Activated CD8-positive, alpha-beta T cell treated with anti-CD3 and anti-CD28 coated beads, Interleukin-2, amount 10 ng/mL, durations not matched to agents 7 days and 5 days (primary cell): ENCODE measurements at regions of chr22 and their contacts with region 1.

Region 1: DNA sequence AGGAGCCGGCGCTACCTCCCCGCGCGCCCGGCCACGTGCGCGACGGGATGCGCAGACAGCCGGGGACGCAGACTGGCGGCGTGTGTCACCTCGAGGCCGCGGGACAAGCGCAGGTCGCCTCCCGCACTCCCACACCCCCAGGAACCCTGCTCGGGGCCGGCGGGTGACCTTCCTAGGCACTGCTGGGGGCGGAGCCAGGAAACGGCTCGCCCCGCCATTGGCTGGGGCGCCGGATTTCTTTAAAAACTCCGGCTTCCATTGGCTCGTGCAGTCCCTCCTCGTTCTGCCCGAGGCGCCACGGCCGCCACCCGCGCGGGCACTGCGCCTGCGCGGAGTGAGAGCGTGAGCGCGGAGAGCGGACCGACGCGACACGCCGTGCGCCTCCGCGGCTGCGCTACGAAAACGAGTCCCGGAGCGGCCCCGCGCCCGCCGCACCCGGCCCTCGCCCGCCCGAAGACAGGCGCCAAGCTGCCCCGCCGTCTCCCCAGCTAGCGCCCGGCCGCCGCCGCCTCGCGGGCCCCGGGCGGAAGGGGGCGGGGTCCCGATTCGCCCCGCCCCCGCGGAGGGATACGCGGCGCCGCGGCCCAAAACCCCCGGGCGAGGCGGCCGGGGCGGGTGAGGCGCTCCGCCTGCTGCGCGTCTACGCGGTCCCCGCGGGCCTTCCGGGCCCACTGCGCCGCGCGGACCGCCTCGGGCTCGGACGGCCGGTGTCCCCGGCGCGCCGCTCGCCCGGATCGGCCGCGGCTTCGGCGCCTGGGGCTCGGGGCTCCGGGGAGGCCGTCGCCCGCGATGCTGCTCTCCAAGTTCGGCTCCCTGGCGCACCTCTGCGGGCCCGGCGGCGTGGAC is at the start of gene PIM3:
- DNase-seq: peak; percentile 95
- ATAC-seq: peak; percentile 86
- H3K4me3 Mint-ChIP-seq: peak within 1 kb of the TSS; percentile 88
- H3K27ac Mint-ChIP-seq: peak within 1 kb of the TSS; percentile 86
- H3K4me1 Mint-ChIP-seq: peaks cover 31% of the 10 kb centered on the region
- H3K27me3 Mint-ChIP-seq: no peaks in the 10 kb centered on the region
- total RNA-seq, gene PIM3: 45.1 to 45.7 TPM

Region 2: GRCh38 chr22:49936018-49936952 is 24.1 kb before region 1 on chr22:
- CTCF ChIA-PET with region 1: interaction called, 3 read pairs
- POLR2A ChIA-PET with region 1: interaction called, 10 read pairs
- DNase-seq: peak; percentile 93
- ATAC-seq: peak; percentile 87
- H3K4me3 Mint-ChIP-seq: peak overlapping the region; percentile 68
- H3K27ac Mint-ChIP-seq: peak overlapping the region; percentile 81
- H3K4me1 Mint-ChIP-seq: peaks cover 22% of the 10 kb centered on the region
- H3K27me3 Mint-ChIP-seq: no peaks in the 10 kb centered on the region

Region 3: DNA sequence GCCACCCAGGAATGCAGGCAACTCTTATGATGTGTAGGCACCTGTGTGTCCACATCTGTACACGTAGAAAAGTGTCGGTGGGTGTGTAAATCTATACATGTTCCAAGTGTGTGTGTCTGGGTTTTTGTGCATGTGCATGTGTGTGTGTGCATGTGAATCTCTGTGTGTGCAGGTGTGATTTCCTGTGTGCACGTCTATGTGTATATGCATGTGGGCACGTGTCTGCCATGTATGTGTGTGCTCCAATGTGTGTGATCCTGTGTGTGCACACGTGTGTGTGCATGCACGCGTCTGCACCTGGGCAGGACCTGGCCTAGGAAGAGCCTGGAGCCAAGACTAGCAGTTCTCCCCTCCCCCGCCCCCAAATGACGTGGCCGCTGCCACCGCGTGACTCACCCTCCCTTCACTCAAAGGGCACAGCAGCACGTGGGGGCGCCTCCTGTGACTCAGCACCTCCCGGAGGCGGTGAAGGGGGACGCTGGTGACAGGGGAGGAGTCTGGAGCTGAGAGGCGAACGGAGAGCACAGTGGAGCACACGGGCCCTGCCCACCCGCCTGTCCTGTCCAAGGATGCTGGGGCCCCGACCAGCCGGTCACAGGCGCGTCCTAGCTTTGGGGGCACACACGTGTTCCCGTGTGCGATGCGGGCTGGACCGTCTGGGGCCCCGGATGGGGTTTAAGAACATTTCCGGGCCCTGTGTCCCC is 10.3 kb after region 1 on chr22:
- CTCF ChIA-PET with region 1: no interaction called
- POLR2A ChIA-PET with region 1: interaction called, 15 read pairs
- DNase-seq: peak; percentile 96
- ATAC-seq: peak; percentile 92
- H3K4me3 Mint-ChIP-seq: peak overlapping the region; percentile 76
- H3K27ac Mint-ChIP-seq: peak overlapping the region; percentile 94
- H3K4me1 Mint-ChIP-seq: peaks cover 25% of the 10 kb centered on the region
- H3K27me3 Mint-ChIP-seq: no peaks in the 10 kb centered on the region